GM10248 (cell line): ENCODE measurements at regions of chr5 and their contacts with region 1.

Region 1: GRCh38 chr5:124725040-124725434 is 21.4 kb downstream of the ZNF608 start:
- DNase-seq: no peak
- CTCF ChIP-seq: peak; percentile 14

Region 2: DNA sequence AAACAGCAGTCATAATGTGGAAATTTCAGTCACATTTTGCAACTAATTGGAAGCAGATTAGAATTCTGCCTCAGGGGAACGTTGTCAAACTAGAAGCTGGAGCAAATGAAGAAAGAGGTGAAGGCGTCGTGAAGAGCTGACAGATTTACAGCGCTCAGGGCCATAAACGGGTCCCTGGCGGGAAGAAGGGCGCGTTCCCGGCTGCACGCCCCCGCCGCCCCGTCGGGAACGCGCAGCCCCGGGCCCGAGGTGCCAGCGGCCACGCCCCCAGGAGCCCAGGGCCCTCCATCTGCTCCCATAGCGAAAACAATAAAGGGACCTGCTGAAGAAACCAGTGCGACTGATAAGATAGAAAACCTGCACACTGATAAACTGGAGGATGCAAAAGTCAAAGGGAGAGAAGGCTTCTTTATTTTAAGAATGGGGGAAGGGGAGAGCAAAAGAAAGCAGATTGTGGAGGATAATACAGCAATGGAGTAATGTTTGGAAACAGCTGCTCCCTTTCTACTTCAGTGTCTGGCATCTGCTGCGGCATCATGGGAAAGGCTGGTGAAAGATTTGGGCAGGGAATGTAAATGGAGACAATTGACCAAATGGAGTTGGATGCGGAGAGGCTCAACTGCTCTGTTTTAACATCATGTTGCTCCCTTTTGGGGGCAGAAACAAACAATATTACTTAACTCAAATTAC is 10.3 kb after region 1 on chr5:
- CTCF ChIA-PET with region 1: interaction called, 11 read pairs
- POLR2A ChIA-PET with region 1: interaction called, 3 read pairs
- DNase-seq: no peak
- CTCF ChIP-seq: no peak